ENCODE measurements at regions of chr14 and their contacts with region 1.

Region 1: DNA sequence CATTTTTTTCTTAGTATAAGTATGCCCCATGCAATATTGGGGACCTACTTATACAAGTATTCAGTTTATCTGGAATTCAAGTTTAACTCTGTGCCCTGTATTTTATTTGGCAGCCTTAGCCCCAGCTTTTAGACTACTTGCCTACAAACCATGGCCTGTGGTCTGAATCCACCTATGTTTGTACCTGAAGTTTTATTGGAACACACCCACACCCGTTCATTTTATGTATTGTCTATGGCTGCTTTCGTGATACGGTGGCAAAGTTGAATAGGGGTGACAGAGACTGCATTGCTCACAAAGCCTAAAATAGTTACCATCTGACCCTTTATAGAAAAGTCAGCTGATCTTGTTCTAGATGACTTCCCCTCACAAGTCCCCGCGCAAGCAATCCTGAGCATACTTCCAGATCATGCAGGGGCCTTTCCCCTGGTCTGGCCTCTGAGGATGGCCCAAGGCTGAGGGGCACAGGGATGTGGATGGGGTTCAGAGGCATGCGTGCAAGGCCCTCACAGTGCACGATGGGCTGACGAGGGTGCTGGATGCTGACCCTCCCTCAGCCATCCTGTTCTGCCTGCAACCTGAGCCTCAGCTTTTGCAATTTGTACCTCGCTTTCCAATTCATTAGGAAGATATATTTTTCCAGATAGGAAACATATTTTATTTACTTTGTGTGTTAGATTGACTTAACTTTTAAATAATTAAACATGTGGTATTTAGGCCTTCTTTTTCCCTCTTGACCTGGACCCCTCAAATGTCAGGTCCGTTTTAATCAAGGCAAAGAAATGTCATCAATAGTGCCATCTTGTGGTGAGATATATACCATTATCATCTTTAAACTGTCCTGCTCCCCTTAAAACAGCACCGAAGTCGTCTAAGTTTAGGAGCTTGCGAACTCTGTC is 527.3 kb upstream of the CCDC196 start:
- DNase-seq: peak; percentile 48
- CTCF ChIP-seq: peak; percentile 55

Region 2: GRCh38 chr14:65940056-65940733 is 18.7 kb before region 1 on chr14:
- CTCF ChIA-PET with region 1: interaction called, 26 read pairs
- POLR2A ChIA-PET with region 1: no interaction called
- DNase-seq: peak; percentile 24
- CTCF ChIP-seq: no peak

Region 3: DNA sequence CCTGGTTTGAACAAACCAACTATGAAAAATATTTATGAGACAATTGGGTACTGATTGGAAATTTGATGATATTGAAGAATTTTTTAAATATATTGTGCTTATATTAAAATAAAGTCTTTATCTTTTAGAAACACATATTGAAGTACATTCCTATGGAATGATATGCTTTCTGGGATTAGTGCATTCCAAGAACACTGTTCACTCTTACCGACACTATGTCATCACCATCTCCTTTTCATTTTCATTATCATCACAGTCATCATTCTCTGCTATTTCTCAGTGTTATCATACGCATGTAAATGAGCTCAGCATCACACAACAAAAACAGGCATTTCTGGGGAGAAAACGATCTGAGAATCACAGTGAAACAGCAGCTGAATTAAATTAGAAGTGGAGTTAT is 14.0 kb after region 1 on chr14:
- CTCF ChIA-PET with region 1: interaction called, 26 read pairs
- POLR2A ChIA-PET with region 1: no interaction called
- DNase-seq: no peak
- CTCF ChIP-seq: no peak